ENCODE measurements at regions of chr9 and their contacts with region 1.

Region 1: DNA sequence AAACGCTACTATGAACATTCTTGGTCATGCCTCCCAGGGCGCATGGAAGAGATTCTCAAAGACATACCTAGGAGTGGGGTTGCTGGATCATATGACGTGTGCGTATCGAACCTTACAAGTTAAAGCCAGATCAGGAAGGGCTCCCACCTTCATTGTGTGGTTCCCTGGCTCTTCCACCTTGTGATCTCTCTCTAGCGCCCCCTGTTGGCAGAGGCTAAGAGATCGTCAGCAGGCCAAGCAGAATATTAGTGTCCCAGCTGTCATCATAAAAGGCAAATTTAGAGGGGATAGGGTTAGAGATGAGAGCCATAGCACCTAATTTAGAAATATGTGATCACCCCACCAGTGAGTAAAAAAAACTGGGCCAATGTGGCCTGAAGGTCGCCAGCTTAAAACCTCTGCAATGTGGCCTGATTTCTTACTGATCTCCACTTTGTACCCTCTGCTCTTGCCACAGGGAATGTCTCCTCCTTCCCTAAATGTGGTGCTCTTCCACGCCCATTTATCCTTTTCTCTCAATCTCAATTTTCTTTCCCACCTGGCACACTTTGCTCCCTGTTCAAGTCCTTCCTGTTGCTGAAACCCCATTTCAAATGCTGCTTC is 91.7 kb upstream of the SHB start:
- DNase-seq: no peak
- H3K4me3 ChIP-seq: no peak overlapping the region
- H3K27ac ChIP-seq: no peak overlapping the region
- H3K27me3 ChIP-seq: peaks cover 8% of the 10 kb centered on the region
- CTCF ChIP-seq: peak; percentile 91

Region 2: DNA sequence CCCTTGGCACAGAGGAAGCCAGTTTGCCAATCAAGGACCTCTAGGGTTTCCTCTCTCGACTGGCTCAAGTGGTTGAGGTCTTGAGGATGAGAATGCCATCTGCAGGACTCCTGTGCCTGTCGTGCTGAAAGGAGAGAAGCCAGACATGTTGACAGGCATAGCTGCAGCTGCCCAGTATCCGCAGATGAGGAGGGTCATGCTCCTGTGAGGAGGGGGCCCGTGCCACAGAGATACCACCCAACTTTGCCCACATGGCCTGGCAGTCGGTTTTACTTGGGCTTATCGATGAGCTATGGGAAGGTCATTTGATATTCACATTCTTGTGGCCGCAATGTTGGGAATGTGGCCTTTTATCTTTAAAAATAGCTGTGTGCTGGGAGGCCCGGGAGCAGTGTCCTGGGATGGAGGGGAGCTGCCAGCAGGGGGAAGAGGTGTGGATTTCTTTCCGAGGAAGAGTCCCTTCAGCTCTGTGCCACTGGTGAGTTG is 492.6 kb before region 1 on chr9:
- CTCF ChIA-PET with region 1: no interaction called
- POLR2A ChIA-PET with region 1: no interaction called
- DNase-seq: no peak
- H3K4me3 ChIP-seq: no peak overlapping the region
- H3K27ac ChIP-seq: no peak overlapping the region
- H3K27me3 ChIP-seq: peaks cover 46% of the 10 kb centered on the region
- CTCF ChIP-seq: peak; percentile 32

Region 3: GRCh38 chr9:37938121-37938891 is 222.4 kb before region 1 on chr9:
- CTCF ChIA-PET with region 1: interaction called, 3 read pairs
- POLR2A ChIA-PET with region 1: interaction called, 11 read pairs
- DNase-seq: peak; percentile 41
- H3K4me3 ChIP-seq: peak overlapping the region; percentile 7
- H3K27ac ChIP-seq: peak overlapping the region; percentile 87
- H3K27me3 ChIP-seq: no peaks in the 10 kb centered on the region
- CTCF ChIP-seq: 0 out of 2 replicates have a peak, but pooled peaks have one; percentile 7

Region 4: DNA sequence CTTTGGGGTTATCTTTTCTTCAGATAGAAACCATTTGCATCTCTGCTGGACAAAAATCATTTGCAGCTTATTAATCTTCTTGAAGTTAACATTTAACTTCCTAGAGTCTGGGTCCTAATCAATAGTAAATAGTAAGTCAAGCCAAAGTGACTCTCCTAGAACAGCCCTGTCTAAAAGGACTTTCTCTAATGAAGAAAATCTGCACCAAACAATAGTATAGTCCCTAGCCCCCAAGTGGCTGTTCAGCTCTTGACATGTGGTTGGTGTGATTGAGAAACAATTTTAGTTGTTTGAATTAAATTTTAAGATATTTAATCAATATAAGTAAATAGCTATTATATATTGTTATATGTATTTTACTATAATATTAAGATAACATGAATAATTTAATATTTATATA is 27.1 kb before region 1 on chr9:
- CTCF ChIA-PET with region 1: interaction called, 13 read pairs
- POLR2A ChIA-PET with region 1: no interaction called
- DNase-seq: no peak
- H3K4me3 ChIP-seq: no peak overlapping the region
- H3K27ac ChIP-seq: no peak overlapping the region
- H3K27me3 ChIP-seq: peaks cover 45% of the 10 kb centered on the region
- CTCF ChIP-seq: no peak

Region 5: GRCh38 chr9:38149647-38150046 is 11.1 kb before region 1 on chr9:
- CTCF ChIA-PET with region 1: interaction called, 36 read pairs
- POLR2A ChIA-PET with region 1: no interaction called
- DNase-seq: no peak
- H3K4me3 ChIP-seq: no peak overlapping the region
- H3K27ac ChIP-seq: no peak overlapping the region
- H3K27me3 ChIP-seq: peaks cover 20% of the 10 kb centered on the region
- CTCF ChIP-seq: no peak

Region 6: DNA sequence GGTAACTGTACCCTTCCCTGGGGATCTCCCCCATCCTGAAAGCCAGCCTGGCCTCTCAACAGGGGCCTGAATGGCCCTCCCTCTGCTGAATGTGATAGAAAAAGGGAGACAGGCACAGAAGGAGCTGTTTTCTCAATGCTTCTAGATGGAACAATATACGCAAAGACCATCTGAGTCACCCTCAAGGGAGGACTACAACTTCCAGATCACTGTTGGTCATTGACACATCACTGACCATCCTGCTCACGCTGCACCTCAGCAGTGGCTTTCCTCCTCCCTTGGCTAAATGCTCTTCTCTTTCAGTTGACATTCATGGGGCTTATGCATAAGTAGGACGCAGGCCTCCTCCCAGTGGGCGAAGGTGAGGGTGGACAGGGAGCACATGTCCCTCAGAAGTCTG is 20.5 kb after region 1 on chr9:
- CTCF ChIA-PET with region 1: interaction called, 12 read pairs
- POLR2A ChIA-PET with region 1: no interaction called
- DNase-seq: no peak
- H3K4me3 ChIP-seq: no peak overlapping the region
- H3K27ac ChIP-seq: no peak overlapping the region
- H3K27me3 ChIP-seq: no peaks in the 10 kb centered on the region
- CTCF ChIP-seq: no peak

Measured in AG04450 (cell line).